Lower leg skin (tissue), 4 donors: ENCODE measurements at regions of chr10 and their contacts with region 1.

Region 1: GRCh38 chr10:8053446-8054290 is 820 bp upstream of the GATA3 start:
- DNase-seq: peak; percentile 70 to 94
- H3K4me3 ChIP-seq: peak overlapping the region; percentile 24
- CTCF ChIP-seq: peak in 1 of 3 donors; percentile 31
- POLR2A ChIP-seq: no peak

Region 2: DNA sequence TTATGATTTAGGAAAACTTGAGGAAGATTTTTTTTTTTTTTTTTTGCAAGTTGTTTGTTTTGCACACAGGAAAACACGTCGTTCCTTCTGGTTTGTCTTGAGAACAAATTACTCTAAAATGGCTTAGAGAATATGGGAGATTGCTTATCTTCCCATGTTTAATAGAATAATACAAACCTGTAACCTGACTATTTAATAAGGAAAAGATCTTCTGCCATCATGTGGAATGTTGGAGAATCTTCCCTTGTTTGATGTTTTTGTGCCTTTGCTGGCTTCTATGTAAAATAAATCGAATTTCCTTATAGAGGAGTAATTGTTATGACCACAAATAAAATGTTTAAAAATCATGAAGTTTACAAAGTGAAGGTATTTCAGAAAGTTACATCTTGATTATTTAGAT is 819.6 kb after region 1 on chr10:
- intact Hi-C with region 1: loop called (anchors 10 kb)
- DNase-seq: no peak
- H3K4me3 ChIP-seq: no peak overlapping the region
- CTCF ChIP-seq: no peak
- POLR2A ChIP-seq: no peak